Calu3 (cell line): ENCODE measurements at regions of chr1 and their contacts with region 1.

Region 1: DNA sequence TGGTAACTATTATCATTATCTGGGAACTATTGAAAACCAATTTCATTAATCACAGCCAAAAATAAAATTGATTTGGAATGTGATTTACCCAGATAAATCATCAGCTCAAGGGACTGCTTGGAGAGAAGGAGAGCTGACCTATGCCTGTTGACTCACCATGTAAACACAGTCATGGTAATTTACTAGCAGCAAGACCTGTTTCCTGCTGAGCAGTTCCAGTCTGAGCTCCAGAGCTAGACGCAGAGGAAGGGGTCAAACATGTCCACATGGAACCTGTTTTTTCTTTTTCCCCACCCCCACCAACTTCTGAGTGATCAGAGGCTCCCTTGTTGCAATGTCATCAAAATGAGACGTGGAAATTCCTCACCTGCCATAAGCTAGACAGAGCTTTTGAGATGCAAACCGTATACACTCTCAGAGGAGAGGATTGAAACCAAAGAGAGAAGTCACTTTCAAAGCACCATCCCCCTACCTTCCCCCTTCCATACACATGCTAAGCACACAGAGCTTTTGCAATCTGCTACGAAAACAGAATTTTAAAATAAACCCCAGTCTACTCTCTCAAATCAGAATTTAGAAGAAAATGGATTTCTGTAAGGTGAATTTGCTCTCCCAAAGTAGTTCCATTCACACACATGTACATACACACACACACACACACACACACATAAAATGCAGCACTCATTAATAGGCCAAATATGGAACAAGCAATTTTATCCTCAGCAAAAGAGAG is 55.9 kb upstream of the PTGFRN start:
- DNase-seq: peak; percentile 71
- H3K4me3 Mint-ChIP-seq: peak overlapping the region; percentile 29
- H3K27ac Mint-ChIP-seq: no peak overlapping the region
- H3K4me1 Mint-ChIP-seq: peaks cover 28% of the 10 kb centered on the region
- H3K27me3 Mint-ChIP-seq: no peaks in the 10 kb centered on the region
- CTCF ChIP-seq: no peak

Region 2: GRCh38 chr1:116737020-116737854 is 116.6 kb before region 1 on chr1:
- CTCF ChIA-PET with region 1: interaction called, 12 read pairs
- intact Hi-C with region 1: no loop called
- DNase-seq: peak; percentile 57
- H3K4me3 Mint-ChIP-seq: no peak overlapping the region
- H3K27ac Mint-ChIP-seq: no peak overlapping the region
- H3K4me1 Mint-ChIP-seq: no peaks in the 10 kb centered on the region
- H3K27me3 Mint-ChIP-seq: peaks cover 20% of the 10 kb centered on the region
- CTCF ChIP-seq: peak; percentile 61

Region 3: DNA sequence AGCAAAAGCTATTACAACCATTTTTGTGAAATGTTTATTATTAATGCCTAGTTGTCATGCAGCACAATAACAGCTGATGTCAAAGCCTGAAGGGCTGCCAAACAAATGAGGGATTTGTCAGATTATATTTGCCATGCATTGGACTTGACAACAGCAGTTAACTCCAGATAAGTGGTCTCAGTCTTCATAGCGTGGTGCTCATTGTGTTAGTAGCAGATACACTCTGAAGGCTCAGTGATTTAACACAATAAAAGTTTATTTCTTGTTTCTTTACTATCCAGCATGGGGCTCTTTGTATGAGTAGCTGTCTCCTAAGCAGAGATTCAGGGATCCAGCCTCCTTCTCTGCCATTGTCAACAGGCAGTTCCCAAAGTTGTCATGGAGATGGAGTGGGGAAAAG is 20.1 kb before region 1 on chr1:
- CTCF ChIA-PET with region 1: no interaction called
- intact Hi-C with region 1: no loop called
- DNase-seq: no peak
- H3K4me3 Mint-ChIP-seq: no peak overlapping the region
- H3K27ac Mint-ChIP-seq: no peak overlapping the region
- H3K4me1 Mint-ChIP-seq: no peaks in the 10 kb centered on the region
- H3K27me3 Mint-ChIP-seq: no peaks in the 10 kb centered on the region
- CTCF ChIP-seq: no peak

Region 4: GRCh38 chr1:116909510-116910378 is 55.9 kb after region 1 on chr1 and contains the start of gene PTGFRN:
- CTCF ChIA-PET with region 1: no interaction called
- intact Hi-C with region 1: loop called (anchors 10 kb)
- DNase-seq: peak; percentile 65
- H3K4me3 Mint-ChIP-seq: no peak within 1 kb of the TSS
- H3K27ac Mint-ChIP-seq: peak within 1 kb of the TSS; percentile 62
- H3K4me1 Mint-ChIP-seq: no peaks in the 10 kb centered on the region
- H3K27me3 Mint-ChIP-seq: no peaks in the 10 kb centered on the region
- CTCF ChIP-seq: no peak
- total RNA-seq, gene PTGFRN: 29.4 and 44.6 TPM in 2 replicates

Region 5: DNA sequence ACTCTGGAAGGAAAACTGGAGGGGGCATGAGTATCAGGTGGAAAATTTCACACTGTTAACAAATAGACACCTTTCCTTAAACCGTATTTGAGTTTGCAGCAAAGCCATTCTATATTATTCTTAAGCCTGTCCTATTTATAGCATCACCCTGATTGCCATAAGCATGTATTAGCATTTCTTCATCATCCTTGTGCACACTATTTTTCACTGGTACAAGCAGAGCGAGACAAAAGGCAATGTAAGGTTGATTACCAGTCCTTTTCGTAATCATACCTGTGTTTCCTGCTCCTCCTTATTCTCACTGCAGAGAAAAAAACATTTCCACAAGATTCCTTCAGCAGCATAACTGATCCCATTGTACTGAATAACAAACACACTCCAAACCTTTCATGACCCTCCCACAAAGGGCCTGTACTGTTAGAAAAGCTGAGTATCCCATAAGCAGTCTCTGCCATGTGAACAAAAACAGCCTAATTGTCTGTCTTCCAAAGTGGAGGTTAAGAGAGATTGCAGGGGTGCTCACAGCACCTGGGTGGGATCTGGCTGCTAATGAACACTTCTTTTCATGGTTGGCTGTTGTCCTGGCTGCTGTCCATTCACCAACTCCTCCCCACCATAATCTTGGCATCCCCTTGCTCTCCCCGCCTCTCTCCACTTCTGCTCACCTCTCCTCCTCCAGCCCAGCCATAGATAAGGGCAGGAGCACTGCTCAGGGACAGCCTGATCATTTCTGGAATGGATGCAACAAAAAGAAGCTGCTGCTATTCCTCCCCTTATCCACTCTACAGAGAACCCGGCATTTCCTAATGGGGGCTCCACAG is 326.5 kb after region 1 on chr1:
- CTCF ChIA-PET with region 1: no interaction called
- intact Hi-C with region 1: no loop called
- DNase-seq: no peak
- H3K4me3 Mint-ChIP-seq: no peak overlapping the region
- H3K27ac Mint-ChIP-seq: no peak overlapping the region
- H3K4me1 Mint-ChIP-seq: peaks cover 18% of the 10 kb centered on the region
- H3K27me3 Mint-ChIP-seq: no peaks in the 10 kb centered on the region
- CTCF ChIP-seq: no peak